GM23248 (cell line): ENCODE measurements at regions of chr1 and their contacts with region 1.

Region 1: DNA sequence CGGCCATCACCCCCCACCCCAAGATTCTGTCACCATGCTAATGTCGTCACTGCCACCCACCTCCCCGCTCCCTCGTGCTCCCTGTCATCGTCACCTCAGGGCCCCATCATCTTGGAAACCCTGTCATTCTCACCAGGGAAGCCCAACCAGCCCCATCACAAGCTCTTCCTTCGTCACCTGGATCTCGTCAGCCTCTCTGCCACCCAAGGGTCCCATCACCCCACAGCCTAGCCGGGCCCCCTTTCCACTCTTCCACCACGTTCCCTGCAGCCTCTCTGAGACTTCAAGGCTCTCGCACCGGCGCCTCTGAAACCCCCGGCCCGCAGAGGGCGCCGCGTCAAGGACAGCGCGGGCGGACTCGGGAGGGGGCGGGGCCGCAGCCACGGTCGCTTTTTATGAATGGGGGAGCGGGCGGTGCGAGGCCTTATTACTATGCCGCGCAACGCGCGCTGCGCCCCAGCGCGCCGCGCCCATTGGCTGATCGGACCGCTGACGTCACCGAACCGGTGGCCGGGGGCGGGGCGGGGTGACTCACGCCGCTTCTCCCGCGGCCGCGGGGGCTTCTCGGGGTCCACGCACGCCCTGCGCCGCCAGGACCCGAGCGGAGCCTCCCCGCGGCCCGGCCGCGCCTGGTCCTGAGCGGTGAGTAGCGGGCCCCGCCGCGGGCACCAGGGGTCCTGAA is at the start of gene GPR3:
- DNase-seq: peak; percentile 97
- H3K4me3 ChIP-seq: peak within 1 kb of the TSS; percentile 90
- H3K27ac ChIP-seq: no peak within 1 kb of the TSS
- H3K4me1 ChIP-seq: peaks cover 12% of the 10 kb centered on the region
- H3K27me3 ChIP-seq: no peaks in the 10 kb centered on the region
- total RNA-seq, gene GPR3: 0.32 and 0.38 TPM in 2 replicates

Region 2: GRCh38 chr1:27102707-27103491 is 289.3 kb before region 1 on chr1:
- in situ Hi-C with region 1: loop called (anchors 5 kb)
- DNase-seq: peak; percentile 72
- H3K4me3 ChIP-seq: no peak overlapping the region
- H3K27ac ChIP-seq: no peak overlapping the region
- H3K4me1 ChIP-seq: peaks cover 26% of the 10 kb centered on the region
- H3K27me3 ChIP-seq: no peaks in the 10 kb centered on the region

Region 3: DNA sequence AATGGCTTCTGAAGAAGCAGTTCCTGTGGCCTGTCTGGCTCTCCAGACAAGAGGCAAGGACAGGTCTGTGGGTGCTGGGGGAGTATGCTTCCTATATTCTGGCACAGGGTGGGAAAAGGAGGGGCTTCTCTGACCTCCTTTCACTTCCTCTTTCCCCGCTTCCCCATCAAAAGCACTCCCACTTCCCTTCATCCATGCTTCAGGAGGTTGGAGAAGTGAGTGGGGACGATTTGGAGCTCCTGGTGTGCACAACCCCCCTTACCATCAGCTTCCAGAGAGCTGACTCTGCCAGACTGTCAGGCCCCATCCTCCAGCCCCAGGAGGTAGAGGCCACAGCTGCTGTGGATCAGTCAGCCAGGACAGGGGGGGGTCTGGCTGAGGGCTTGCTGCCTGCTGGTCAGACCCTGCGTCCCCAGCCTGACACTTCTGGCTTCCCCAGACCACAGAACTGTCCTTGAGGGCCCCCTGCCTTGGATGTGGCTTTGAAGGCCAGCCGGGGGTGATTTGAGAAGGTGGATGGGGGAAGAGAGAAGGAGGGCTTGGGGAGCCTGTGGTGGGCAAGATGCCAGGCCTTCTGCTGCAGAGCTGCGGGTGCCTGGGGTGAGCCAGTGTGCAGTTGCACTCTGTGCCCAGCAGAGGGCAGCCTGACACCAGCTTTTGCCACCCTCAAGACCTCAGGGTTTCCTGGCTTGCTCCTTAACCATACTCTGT is 91.7 kb before region 1 on chr1:
- in situ Hi-C with region 1: loop called (anchors 5 kb)
- DNase-seq: peak; percentile 88
- H3K4me3 ChIP-seq: no peak overlapping the region
- H3K27ac ChIP-seq: peak overlapping the region; percentile 91
- H3K4me1 ChIP-seq: peaks cover 22% of the 10 kb centered on the region
- H3K27me3 ChIP-seq: no peaks in the 10 kb centered on the region

Region 4: GRCh38 chr1:27650539-27651175 is 258.4 kb after region 1 on chr1:
- in situ Hi-C with region 1: no loop called
- DNase-seq: peak; percentile 69
- H3K4me3 ChIP-seq: no peak overlapping the region
- H3K27ac ChIP-seq: peak overlapping the region; percentile 60
- H3K4me1 ChIP-seq: peaks cover 23% of the 10 kb centered on the region
- H3K27me3 ChIP-seq: no peaks in the 10 kb centered on the region